Right lobe of liver (tissue), 6 donors: ENCODE measurements at regions of chr19 and their contacts with region 1.

Region 1: DNA sequence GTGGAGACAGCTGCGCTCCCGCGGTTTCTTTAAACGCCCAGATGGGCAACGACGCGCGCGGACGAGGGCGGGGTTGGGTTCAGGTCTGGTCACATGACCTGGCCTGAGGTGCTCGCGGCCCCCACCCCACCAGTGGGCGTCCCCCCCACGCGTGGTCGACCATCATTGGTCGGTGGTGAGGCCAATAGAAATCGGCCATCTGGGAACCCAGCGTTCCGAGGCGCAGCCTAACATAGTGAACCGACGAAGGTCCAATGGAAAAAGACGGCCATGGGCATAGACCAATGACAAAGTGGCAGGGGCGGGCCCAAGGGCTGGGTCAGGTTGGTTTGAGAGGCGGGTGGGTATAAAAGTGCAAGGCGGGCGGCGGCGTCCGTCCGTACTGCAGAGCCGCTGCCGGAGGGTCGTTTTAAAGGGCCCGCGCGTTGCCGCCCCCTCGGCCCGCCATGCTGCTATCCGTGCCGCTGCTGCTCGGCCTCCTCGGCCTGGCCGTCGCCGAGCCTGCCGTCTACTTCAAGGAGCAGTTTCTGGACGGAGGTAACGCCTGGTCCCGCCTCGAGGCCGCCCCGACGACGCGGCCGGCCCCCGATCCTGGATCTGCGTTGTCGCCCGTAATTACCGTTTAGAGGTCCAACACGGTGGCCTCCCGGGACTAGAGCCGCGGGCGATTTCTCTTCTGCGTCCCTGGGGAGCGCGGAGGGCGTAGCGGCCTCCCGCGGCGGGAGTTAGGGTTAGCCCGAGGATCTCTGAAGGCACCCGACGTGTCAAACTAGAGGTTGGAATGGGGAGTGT is at the start of gene CALR:
- DNase-seq: peak; percentile 99 to 100 (median 99)
- ATAC-seq: peak; percentile 78 to 92 (median 88)
- H3K4me3 ChIP-seq: peak within 1 kb of the TSS; percentile 94 to 100 (median 97)
- H3K27ac ChIP-seq: peak within 1 kb of the TSS; percentile 77 to 92 (median 81)
- H3K4me1 ChIP-seq: peaks cover 0 to 45% (median 11%) of the 10 kb centered on the region in 4 donors
- H3K27me3 ChIP-seq: no peaks in the 10 kb centered on the region
- CTCF ChIP-seq: no peak
- POLR2A ChIP-seq: peak; percentile 100
- total RNA-seq, gene CALR: 771 to 1,471 (median 1,008) TPM

Region 2: DNA sequence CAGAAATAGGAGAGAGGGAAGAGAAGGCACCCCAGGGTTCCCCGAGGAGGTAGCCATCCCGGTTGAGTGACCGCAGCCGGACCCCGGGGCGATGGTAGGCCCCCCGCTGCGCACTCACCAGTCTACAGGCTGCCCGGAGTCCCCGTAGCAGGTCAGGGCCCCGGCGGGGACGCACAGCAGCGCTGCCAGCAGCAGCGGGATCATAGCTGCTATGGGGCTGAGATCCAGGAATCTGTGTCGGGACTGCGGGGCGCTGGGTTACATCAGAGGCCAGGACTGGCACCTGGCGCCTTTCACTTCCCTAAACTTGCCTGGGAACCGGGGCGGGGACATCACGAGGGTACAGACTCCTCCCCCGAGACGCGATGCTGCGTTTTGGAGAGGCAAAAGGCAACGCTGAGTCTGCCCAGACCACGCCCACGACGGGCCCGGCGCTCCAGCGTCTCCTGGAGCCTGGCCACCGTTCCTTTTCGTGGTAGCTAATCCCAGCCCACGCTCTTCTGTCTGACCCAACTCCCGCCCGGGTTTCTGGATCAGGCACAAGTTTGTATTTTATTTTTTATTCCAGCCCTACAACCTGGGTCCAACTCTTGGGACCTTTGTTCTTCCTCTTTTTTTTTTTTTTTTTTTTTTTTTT is 57.1 kb before region 1 on chr19 and contains the start of gene DNASE2:
- intact Hi-C with region 1: loop called in 1 of 2 experiments (anchors 10 kb)
- DNase-seq: peak; percentile 98 to 99 (median 98)
- ATAC-seq: peak; percentile 90 to 95 (median 93)
- H3K4me3 ChIP-seq: peak within 1 kb of the TSS; percentile 51 to 72 (median 70)
- H3K27ac ChIP-seq: peak within 1 kb of the TSS; percentile 63 to 71 (median 68)
- H3K4me1 ChIP-seq: peaks cover 0 to 13% (median 0%) of the 10 kb centered on the region in 4 donors
- H3K27me3 ChIP-seq: no peaks in the 10 kb centered on the region
- CTCF ChIP-seq: no peak
- POLR2A ChIP-seq: peak; percentile 91
- total RNA-seq, gene DNASE2: 18.2 to 36.3 (median 26.8) TPM

Region 3: GRCh38 chr19:12985049-12985776 is 46.8 kb after region 1 on chr19:
- intact Hi-C with region 1: no loop called
- DNase-seq: peak in 1 of 3 donors; percentile 59
- ATAC-seq: peak; percentile 15 to 67 (median 53)
- H3K4me3 ChIP-seq: no peak overlapping the region
- H3K27ac ChIP-seq: no peak overlapping the region
- H3K4me1 ChIP-seq: no peaks in the 10 kb centered on the region
- H3K27me3 ChIP-seq: no peaks in the 10 kb centered on the region
- CTCF ChIP-seq: no peak
- POLR2A ChIP-seq: no peak

Region 4: GRCh38 chr19:13002166-13002898 is 63.9 kb after region 1 on chr19:
- intact Hi-C with region 1: no loop called
- DNase-seq: peak in 1 of 3 donors; percentile 76
- ATAC-seq: peak; percentile 43 to 77 (median 60)
- H3K4me3 ChIP-seq: peak overlapping the region in 2 of 3 donors; percentile 11 to 40
- H3K27ac ChIP-seq: peak overlapping the region; percentile 7 to 47 (median 31)
- H3K4me1 ChIP-seq: peaks cover 0 to 27% (median 1%) of the 10 kb centered on the region in 4 donors
- H3K27me3 ChIP-seq: no peaks in the 10 kb centered on the region
- CTCF ChIP-seq: no peak
- POLR2A ChIP-seq: no peak